KBM-7 (cell line): ENCODE measurements at regions of chr9 and their contacts with region 1.

Region 1: DNA sequence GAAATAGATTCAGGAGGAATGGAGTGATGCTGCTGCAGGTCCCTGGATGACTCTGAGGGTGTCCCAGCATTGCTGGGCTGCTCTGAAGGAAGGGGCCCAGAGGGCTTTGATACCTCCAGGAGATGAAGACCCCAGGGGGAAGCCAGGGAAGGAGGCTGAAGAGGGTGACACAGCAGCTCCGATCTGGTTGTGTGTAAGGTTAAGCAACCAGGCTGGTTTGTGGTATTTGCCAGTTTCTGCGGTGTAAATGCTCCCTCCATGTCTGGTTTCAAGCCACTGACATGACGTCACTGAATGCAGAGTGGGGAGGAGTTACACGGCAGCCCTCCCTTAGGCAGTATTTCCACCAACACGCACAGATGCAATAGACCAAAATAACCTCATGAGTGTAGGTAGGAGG is 40.0 kb upstream of the ORM1 start:
- DNase-seq: no peak

Region 2: GRCh38 chr9:114082017-114082762 is 200.7 kb before region 1 on chr9:
- in situ Hi-C with region 1: loop called (anchors 10 kb)
- DNase-seq: peak; percentile 73